K562 (cell line): ENCODE measurements at regions of chr7 and their contacts with region 1.

Region 1: DNA sequence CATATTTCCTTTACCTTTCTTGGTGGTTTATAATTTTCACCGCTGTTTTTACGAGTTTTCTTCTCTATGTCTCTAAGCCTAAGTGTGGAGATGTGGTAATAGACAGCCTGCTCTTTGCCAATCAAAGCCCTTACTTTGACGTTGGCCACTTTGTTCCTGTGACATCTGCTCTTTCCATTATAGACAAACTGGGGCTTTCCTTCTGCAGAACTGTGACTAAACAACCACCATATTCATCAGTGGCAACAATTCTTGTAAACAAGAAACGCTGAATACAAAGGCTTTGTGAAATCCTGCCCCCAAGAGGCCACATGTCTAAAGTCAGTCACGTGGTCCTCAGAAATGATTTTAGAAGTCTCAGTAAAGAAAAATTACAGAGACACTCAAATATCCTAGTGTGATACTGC is 59.6 kb upstream of the CAPZA2 start:
- DNase-seq: peak; percentile 62 to 73 (median 70)
- ATAC-seq: peak; percentile 92
- H3K4me3 ChIP-seq: no peak overlapping the region
- H3K27ac ChIP-seq: no peak overlapping the region
- H3K4me1 ChIP-seq: no peaks in the 10 kb centered on the region
- H3K27me3 ChIP-seq: peaks cover 8 to 22% of the 10 kb centered on the region in 2 experiments; a peak in 4 of 5 replicates
- CTCF ChIP-seq: peak; percentile 74 to 89 (median 82)
- EP300 ChIP-seq: no peak
- POLR2A ChIP-seq: no peak
- RAD21 ChIP-seq: peak; percentile 64 to 79

Region 2: GRCh38 chr7:116671681-116672595 is 130.8 kb before region 1 on chr7 and contains the start of gene MET:
- CTCF ChIA-PET with region 1: interaction called, 32 read pairs
- POLR2A ChIA-PET with region 1: no interaction called
- in situ Hi-C with region 1: no loop called
- intact Hi-C with region 1: no loop called
- DNase-seq: peak; percentile 42 to 80 (median 62)
- ATAC-seq: peak; percentile 98
- H3K4me3 ChIP-seq: peak within 1 kb of the TSS; percentile 1; the same call in 1 of the 2 replicates
- H3K27ac ChIP-seq: no peak within 1 kb of the TSS
- H3K4me1 ChIP-seq: peaks cover 0 to 11% of the 10 kb centered on the region in 2 experiments; a peak in 2 of 5 replicates
- H3K27me3 ChIP-seq: peaks cover 16 to 28% of the 10 kb centered on the region in 2 experiments
- CTCF ChIP-seq: peak; percentile 68 to 83 (median 74)
- EP300 ChIP-seq: no peak
- POLR2A ChIP-seq: no peak
- RAD21 ChIP-seq: peak; percentile 83 to 87
- polyA plus RNA-seq, gene MET: 1.3 to 1.5 TPM

Region 3: DNA sequence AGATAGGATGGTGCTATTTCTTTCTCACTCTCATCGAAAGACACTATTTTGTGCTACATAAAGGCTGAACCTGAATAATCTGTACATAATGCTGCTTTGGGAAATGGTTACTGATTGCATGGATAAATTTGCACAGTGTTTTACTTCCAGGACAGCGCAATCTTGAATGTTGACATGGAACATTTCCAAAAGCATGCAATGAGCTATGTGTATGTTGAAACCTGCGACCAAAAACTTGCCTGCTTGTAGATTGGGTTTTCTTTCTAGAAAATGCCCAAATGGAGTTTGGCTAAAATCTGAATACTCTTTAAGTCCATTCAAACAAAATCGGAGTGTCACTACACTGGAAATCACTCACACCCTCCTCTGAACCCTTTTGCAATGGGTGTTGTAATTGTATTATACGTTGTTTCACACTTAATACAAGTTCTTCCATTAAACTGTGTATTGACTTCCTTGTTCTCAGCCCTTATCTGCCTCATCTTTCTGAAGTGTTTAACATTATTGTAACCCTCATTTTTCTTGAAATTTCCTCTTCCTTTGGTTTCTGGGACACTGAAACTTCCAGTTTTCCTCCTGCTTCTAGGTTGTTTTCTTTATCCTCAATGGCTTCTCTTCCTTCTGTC is 14.1 kb before region 1 on chr7:
- CTCF ChIA-PET with region 1: no interaction called
- POLR2A ChIA-PET with region 1: no interaction called
- in situ Hi-C with region 1: no loop called
- intact Hi-C with region 1: no loop called
- DNase-seq: no peak
- ATAC-seq: no peak
- H3K4me3 ChIP-seq: no peak overlapping the region
- H3K27ac ChIP-seq: no peak overlapping the region
- H3K4me1 ChIP-seq: no peaks in the 10 kb centered on the region
- H3K27me3 ChIP-seq: peaks cover 10 to 14% of the 10 kb centered on the region in 2 experiments; a peak in 4 of 5 replicates
- CTCF ChIP-seq: no peak
- EP300 ChIP-seq: no peak
- POLR2A ChIP-seq: no peak
- RAD21 ChIP-seq: no peak